OCI-LY7 (cell line): ENCODE measurements at regions of chr15 and their contacts with region 1.

Region 1: DNA sequence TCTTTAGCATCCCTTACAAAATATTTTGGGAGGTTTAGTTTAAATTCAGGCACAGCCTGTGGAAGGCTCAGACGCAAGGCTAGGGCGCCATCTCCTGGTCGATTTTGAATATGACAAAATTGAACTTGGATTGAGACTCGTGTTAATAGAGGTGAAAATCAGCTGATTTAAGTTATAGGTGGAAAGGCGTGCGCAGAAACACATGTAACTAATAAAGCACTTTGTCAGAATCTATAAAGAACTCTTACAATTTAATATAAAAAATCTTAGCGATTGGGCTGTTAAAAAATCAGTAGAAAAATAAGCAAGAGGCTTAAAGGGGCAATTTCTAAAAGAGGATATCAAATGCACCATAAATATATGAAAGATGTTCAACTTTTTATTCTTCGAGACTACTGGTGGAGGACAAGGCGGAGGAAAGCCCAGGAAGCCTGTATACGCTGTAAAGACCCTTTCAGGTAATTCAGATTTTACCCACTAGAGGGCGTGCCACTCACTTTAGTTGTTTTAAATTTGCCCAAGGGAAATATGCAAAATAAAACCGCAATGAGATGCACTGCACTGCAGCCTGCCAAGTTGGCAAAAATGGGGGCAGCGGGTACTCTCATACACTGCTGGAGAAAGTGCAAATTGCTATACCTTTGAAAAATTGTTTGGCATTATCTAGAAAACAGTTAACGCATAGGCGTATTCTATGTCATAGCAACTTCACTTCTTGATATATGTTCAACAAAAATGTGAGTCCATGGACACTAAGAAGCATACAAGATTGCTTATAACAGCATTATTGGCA is 64.7 kb downstream of the SLC30A4 start:
- DNase-seq: peak; percentile 94
- H3K4me3 ChIP-seq: peak overlapping the region; percentile 67
- H3K27ac ChIP-seq: peak overlapping the region; percentile 63
- H3K4me1 ChIP-seq: peaks cover 29% of the 10 kb centered on the region
- CTCF ChIP-seq: peak; percentile 95

Region 2: DNA sequence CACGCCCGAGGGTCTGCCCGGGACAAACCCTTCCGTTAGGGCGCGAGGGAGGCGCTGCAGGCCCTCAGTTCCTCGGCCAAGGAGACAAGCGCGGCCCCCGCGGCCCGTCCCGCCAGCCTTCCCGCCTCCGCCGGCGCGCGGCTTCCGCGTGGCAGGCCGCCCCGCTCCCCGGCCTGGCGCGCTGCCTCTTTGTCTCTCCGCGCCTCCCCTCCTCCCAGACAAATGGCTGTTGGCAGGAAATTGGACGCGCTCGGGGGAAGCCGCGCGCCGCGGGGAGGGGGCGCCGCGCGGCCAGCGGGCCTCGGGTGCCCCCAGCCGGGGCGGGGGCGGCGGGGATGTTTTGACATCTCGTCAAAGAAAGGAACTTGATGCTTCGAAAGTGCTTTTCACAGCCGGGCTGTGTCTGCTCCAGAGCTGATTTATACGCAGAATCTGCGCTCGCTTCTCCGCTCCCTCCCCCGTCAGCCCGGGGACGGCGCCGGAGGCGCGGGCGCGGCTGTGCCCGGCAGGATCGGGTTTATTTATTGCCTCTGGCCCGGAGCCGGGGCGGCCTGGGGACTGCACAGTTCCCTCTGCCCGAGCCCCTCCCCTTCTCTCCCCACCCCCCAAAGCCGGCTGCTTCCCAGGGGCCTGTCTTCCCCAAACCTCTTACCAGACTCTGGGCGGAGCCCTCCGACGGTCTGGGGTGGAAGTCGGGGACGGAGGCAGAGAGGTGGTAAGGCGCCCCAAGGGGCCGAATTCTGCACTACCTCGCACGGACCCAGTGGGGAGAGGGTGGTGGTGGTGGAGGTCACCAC is 290.8 kb before region 1 on chr15:
- CTCF ChIA-PET with region 1: interaction called, 3 read pairs
- POLR2A ChIA-PET with region 1: no interaction called
- intact Hi-C with region 1: loop called (anchors 1 kb)
- DNase-seq: peak; percentile 91
- H3K4me3 ChIP-seq: peak overlapping the region; percentile 73
- H3K27ac ChIP-seq: peak overlapping the region; percentile 80
- H3K4me1 ChIP-seq: peaks cover 39% of the 10 kb centered on the region
- CTCF ChIP-seq: peak; percentile 78

Region 3: GRCh38 chr15:45307230-45307924 is 150.5 kb before region 1 on chr15:
- CTCF ChIA-PET with region 1: no interaction called
- POLR2A ChIA-PET with region 1: no interaction called
- intact Hi-C with region 1: loop called (anchors 1 kb)
- DNase-seq: peak; percentile 33
- H3K4me3 ChIP-seq: no peak overlapping the region
- H3K27ac ChIP-seq: no peak overlapping the region
- H3K4me1 ChIP-seq: no peaks in the 10 kb centered on the region
- CTCF ChIP-seq: peak; percentile 76

Region 4: GRCh38 chr15:45510758-45511280 is 53.0 kb after region 1 on chr15:
- CTCF ChIA-PET with region 1: no interaction called
- POLR2A ChIA-PET with region 1: no interaction called
- intact Hi-C with region 1: no loop called
- DNase-seq: no peak
- H3K4me3 ChIP-seq: no peak overlapping the region
- H3K27ac ChIP-seq: no peak overlapping the region
- H3K4me1 ChIP-seq: no peaks in the 10 kb centered on the region
- CTCF ChIP-seq: no peak

Region 5: DNA sequence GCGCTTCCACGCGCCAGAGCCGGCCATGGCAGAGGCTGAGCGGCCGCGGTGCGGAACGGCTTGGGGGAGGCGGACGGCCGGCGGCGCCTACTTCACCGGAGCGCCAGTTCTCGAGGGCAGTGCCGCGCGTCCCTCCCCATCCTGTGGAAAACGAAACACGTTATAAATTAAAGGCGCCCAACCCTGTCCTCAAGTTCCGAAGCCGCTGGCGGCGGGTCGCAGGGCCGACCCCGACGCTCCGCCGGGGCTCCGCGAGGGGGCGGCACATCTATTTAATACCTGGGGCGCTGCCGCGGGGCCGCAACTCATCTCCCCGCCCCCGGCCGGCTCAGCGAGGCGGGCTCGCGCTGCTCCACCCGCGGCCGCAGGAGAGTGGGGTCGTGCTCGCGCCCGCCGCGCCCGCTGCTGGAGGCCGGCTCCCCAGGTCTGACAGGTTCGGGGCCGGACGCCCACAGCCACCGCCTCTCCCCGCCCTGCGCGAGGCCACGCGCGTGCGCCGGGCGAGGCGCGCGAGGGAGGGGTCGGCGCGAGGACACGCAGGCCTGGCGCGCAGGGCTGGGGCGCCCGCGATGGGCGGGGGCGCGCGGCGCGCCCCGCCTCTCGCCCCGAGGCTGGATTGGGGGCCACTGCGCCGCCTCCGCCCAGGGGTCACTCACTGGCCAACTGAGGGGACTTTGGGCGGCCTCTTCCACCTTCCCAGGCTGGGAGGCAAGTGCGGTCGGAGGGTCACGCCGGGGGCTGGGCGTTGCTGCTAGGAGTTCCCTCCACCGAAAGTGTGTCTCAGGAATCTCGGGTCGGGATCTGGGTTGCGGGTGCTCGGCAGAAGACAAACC is 64.7 kb after region 1 on chr15 and contains the start of gene SLC30A4:
- CTCF ChIA-PET with region 1: no interaction called
- POLR2A ChIA-PET with region 1: no interaction called
- intact Hi-C with region 1: loop called (anchors 5 kb)
- DNase-seq: peak; percentile 57
- H3K4me3 ChIP-seq: peak within 1 kb of the TSS; percentile 67
- H3K27ac ChIP-seq: no peak within 1 kb of the TSS
- H3K4me1 ChIP-seq: peaks cover 15% of the 10 kb centered on the region
- CTCF ChIP-seq: peak; percentile 63
- total RNA-seq, gene SLC30A4: 0.13 TPM in 2 replicates